CD4-positive, alpha-beta memory T cell (primary cell): ENCODE measurements at regions of chr22 and their contacts with region 1.

Region 1: DNA sequence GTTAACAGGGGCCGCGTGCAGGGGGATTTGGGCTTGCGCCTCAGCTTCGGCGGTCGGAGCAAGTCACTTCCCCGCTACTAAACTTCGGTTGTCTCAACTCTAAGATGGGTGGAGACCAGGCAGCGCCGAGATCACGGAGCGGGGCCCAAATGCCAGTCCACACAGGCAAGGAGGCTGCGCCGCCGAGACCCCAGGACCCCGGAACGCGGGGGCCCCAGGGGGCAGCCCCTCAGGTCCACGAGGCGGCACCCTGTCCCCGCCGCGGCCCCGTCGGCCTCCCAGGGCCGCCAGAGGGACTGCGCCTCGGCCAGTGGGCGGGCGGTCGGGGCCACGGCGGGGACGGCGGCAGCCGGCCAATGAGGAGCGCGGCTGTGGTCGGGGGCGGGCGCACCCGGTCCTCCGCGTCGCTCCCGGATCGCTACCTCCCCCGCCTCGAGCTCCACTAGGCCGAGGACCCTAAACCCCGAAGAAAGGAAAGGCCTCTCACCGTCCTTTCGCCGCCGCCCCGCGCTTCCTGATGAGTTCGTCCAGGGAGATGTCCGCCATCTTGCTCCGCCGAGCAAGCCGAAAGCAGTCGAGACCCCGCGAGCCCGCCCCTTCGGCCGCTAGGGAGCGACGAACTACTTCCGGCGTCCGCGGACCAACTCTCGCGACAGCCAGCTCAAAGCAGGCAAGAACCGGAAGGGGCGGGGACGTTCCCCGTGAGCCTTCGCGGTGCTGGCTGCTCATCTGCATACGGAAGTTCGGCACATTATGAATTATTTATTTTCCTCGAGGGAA is at the start of gene POLDIP3:
- DNase-seq: peak; percentile 99
- H3K4me3 ChIP-seq: peak within 1 kb of the TSS; percentile 74 to 84
- H3K4me3 Mint-ChIP-seq: peak within 1 kb of the TSS; percentile 88 to 98 (median 96)
- H3K27ac ChIP-seq: peak within 1 kb of the TSS; percentile 90
- H3K27ac Mint-ChIP-seq: peak within 1 kb of the TSS; percentile 99 to 100 (median 100)
- H3K4me1 ChIP-seq: peaks cover 54% of the 10 kb centered on the region
- H3K4me1 Mint-ChIP-seq: peaks cover 35 to 70% (median 47%) of the 10 kb centered on the region in 4 donors
- H3K27me3 ChIP-seq: no peaks in the 10 kb centered on the region
- H3K27me3 Mint-ChIP-seq: no peaks in the 10 kb centered on the region
- total RNA-seq, gene POLDIP3: 80.6 to 82.3 TPM

Region 2: DNA sequence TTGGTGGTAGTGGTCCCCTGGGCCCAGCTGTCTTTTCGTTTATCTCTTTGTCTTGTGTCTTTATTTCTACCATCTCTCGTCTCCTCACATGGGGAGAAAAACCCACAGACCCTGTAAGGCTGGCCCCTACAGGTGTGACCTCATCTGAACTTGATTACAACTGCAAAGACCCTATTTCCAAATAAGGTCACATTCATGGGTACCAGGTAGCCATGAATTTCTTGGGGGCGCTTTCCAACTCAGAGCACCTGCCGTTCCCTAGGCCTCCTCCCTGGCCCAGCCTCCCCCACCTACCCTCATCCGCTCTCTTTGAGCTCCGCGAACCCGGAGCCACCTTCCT is 80.9 kb before region 1 on chr22:
- CTCF ChIA-PET with region 1: no interaction called
- POLR2A ChIA-PET with region 1: interaction called, 12 read pairs
- intact Hi-C with region 1: no loop called
- DNase-seq: peak in 1 of 5 donors; percentile 50
- H3K4me3 ChIP-seq: peak overlapping the region; percentile 56 to 70
- H3K4me3 Mint-ChIP-seq: peak overlapping the region; percentile 85 to 98 (median 90)
- H3K27ac ChIP-seq: peak overlapping the region; percentile 79
- H3K27ac Mint-ChIP-seq: peak overlapping the region; percentile 89 to 100 (median 96)
- H3K4me1 ChIP-seq: peaks cover 6% of the 10 kb centered on the region
- H3K4me1 Mint-ChIP-seq: peaks cover 5 to 17% (median 11%) of the 10 kb centered on the region in 4 donors
- H3K27me3 ChIP-seq: no peaks in the 10 kb centered on the region
- H3K27me3 Mint-ChIP-seq: no peaks in the 10 kb centered on the region

Region 3: GRCh38 chr22:42604403-42604802 is 10.1 kb before region 1 on chr22:
- CTCF ChIA-PET with region 1: no interaction called
- POLR2A ChIA-PET with region 1: interaction called, 10 read pairs
- intact Hi-C with region 1: no loop called
- DNase-seq: no peak
- H3K4me3 ChIP-seq: no peak overlapping the region
- H3K4me3 Mint-ChIP-seq: no peak overlapping the region
- H3K27ac ChIP-seq: no peak overlapping the region
- H3K27ac Mint-ChIP-seq: peak overlapping the region in 1 of 7 donors; percentile 42
- H3K4me1 ChIP-seq: peaks cover 18% of the 10 kb centered on the region
- H3K4me1 Mint-ChIP-seq: peaks cover 18 to 57% (median 27%) of the 10 kb centered on the region in 4 donors
- H3K27me3 ChIP-seq: no peaks in the 10 kb centered on the region
- H3K27me3 Mint-ChIP-seq: no peaks in the 10 kb centered on the region

Region 4: GRCh38 chr22:42649246-42650099 is 35.0 kb after region 1 on chr22 and contains the start of gene CYB5R3:
- CTCF ChIA-PET with region 1: no interaction called
- POLR2A ChIA-PET with region 1: interaction called, 59 read pairs
- intact Hi-C with region 1: loop called (anchors 1 kb)
- DNase-seq: peak; percentile 68 to 77 (median 76)
- H3K4me3 ChIP-seq: peak within 1 kb of the TSS; percentile 67 to 86
- H3K4me3 Mint-ChIP-seq: peak within 1 kb of the TSS; percentile 98 to 100 (median 99)
- H3K27ac ChIP-seq: peak within 1 kb of the TSS; percentile 69
- H3K27ac Mint-ChIP-seq: peak within 1 kb of the TSS; percentile 90 to 100 (median 100)
- H3K4me1 ChIP-seq: peaks cover 42% of the 10 kb centered on the region
- H3K4me1 Mint-ChIP-seq: peaks cover 10 to 42% (median 25%) of the 10 kb centered on the region in 4 donors
- H3K27me3 ChIP-seq: no peaks in the 10 kb centered on the region
- H3K27me3 Mint-ChIP-seq: peaks cover 2% of the 10 kb centered on the region in 2 donors
- total RNA-seq, gene CYB5R3: 42.7 to 43.2 TPM

Region 5: GRCh38 chr22:43088979-43089717 is 474.6 kb after region 1 on chr22 and contains the start of gene TTLL1:
- CTCF ChIA-PET with region 1: no interaction called
- POLR2A ChIA-PET with region 1: no interaction called
- intact Hi-C with region 1: loop called (anchors 10 kb)
- DNase-seq: peak; percentile 86 to 89 (median 88)
- H3K4me3 ChIP-seq: peak within 1 kb of the TSS; percentile 41 to 91
- H3K4me3 Mint-ChIP-seq: peak within 1 kb of the TSS; percentile 85 to 96 (median 92)
- H3K27ac ChIP-seq: peak within 1 kb of the TSS; percentile 27
- H3K27ac Mint-ChIP-seq: peak within 1 kb of the TSS; percentile 75 to 92 (median 89)
- H3K4me1 ChIP-seq: peaks cover 13% of the 10 kb centered on the region
- H3K4me1 Mint-ChIP-seq: peaks cover 8 to 26% (median 18%) of the 10 kb centered on the region in 4 donors
- H3K27me3 ChIP-seq: no peaks in the 10 kb centered on the region
- H3K27me3 Mint-ChIP-seq: no peaks in the 10 kb centered on the region
- total RNA-seq, gene TTLL1: 6.4 to 7.8 TPM